HepG2 (cell line): ENCODE measurements at regions of chr6 and their contacts with region 1.

Region 1: GRCh38 chr6:57172136-57173055 is at the start of gene BAG2:
- DNase-seq: peak; percentile 88
- ATAC-seq: peak; percentile 94
- H3K4me3 ChIP-seq: peak within 1 kb of the TSS; percentile 69 to 90 (median 72)
- H3K27ac ChIP-seq: peak within 1 kb of the TSS; percentile 94
- H3K4me1 ChIP-seq: peaks cover 41% of the 10 kb centered on the region
- H3K27me3 ChIP-seq: no peaks in the 10 kb centered on the region; a peak in 1 of 5 replicates
- CTCF ChIP-seq: peak; percentile 59
- EP300 ChIP-seq: peak; percentile 6 to 53; a peak in 2 of 4 replicates
- POLR2A ChIP-seq: peak; percentile 93 to 98
- RAD21 ChIP-seq: peak; percentile 73; the same call in 1 of the 2 replicates
- total RNA-seq, gene BAG2: 15.1 and 23.0 TPM in 2 replicates

Region 2: DNA sequence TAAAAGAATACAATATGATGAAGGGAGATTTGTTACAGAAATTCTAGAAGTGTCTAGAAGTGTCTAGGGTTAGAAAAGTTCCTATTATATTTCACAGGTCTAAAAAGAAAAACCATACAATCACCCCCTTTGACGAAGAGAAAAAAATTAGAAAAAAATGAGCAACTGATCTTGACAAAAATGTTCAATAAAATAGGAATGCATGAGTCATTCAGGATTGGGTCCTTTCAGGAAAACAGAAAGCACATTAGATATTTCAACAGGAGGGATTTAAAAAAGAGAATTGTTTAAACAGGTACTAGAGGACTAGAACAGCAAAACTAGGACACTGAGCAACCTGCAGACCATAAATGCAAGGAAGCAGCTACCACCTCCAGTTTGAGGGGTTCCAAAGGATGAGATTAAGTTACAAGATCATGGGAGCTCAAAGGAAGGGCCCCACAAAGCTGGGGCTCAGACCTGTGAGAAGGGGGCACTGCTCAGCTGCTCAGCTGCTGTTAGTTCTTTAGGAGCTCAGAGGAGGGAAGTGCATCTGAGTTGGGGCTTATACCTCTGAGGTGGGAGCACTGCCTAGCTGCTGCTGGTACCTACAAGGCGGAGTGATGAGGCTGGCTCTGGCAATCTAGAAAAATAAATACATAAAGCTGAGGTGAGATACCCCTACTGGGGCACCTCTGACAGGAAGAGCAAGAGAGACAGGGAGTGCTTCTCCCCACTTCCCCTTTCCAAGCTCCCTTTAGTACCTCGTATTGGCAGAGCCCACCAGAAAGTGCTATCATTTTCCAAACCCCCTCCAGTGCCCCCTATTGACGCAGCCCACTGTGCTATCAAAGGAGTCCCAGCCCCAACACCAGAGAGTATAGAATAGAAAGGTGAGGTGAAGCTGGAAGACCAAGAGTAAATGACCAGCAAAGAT is 244.6 kb before region 1 on chr6:
- CTCF ChIA-PET with region 1: no interaction called
- POLR2A ChIA-PET with region 1: no interaction called
- in situ Hi-C with region 1: no loop called
- intact Hi-C with region 1: no loop called
- DNase-seq: no peak
- ATAC-seq: no peak
- H3K4me3 ChIP-seq: no peak overlapping the region
- H3K27ac ChIP-seq: no peak overlapping the region
- H3K4me1 ChIP-seq: 0 out of 2 replicates have a peak, but pooled peaks cover 4% of the 10 kb centered on the region
- H3K27me3 ChIP-seq: peaks cover 0 to 1% of the 10 kb centered on the region in 2 experiments; a peak in 1 of 5 replicates
- CTCF ChIP-seq: no peak
- EP300 ChIP-seq: no peak
- POLR2A ChIP-seq: no peak
- RAD21 ChIP-seq: no peak

Region 3: DNA sequence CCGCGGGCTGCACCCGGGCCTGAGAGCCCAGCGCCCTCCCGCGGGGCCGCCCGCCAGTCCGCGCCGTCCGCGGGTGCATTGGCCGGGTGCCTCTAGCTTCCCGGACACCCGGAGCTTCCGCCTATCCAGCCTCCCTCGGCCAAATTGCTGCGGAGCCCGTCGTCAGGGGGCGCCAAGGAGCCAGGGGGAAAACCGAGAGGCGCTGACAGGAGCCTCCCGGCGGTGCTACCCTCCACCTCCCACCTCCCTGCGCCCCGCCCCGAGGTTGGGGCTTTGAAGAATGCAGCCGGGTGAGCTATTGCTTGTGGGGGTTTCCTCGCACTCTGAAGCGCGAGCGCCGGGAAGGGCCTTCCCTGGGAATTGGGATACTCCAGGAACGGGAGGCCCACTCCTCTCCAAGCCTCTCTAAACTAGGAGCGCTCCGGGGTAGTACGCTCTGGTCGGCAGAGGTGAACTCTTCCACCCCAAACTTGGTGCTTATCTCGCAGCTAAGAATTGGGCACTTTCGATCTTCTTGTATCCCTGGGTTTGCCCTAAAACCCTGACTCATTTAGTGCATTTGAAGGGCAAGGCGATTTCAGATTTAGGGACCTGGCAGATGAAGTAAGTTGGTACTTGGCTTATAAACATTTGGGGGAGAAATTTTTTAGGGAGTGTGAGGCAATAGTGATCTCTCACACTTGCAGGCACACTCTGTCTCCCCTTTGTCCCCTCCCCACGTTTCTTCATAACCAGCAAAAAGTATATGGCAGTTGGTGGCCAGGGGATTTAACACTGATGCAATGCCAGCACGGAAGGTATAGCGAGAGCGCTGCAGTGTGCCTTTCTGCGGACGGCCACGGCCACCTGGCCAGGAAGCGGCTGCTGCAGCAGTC is 217.0 kb before region 1 on chr6:
- CTCF ChIA-PET with region 1: no interaction called
- POLR2A ChIA-PET with region 1: interaction called, 3 read pairs
- in situ Hi-C with region 1: no loop called
- intact Hi-C with region 1: loop called (anchors 5 kb)
- DNase-seq: peak; percentile 83
- ATAC-seq: peak; percentile 91
- H3K4me3 ChIP-seq: peak overlapping the region; percentile 51 to 75 (median 56)
- H3K27ac ChIP-seq: no peak overlapping the region
- H3K4me1 ChIP-seq: peaks cover 14% of the 10 kb centered on the region
- H3K27me3 ChIP-seq: peaks cover 0 to 14% of the 10 kb centered on the region in 2 experiments; a peak in 3 of 5 replicates
- CTCF ChIP-seq: peak; percentile 93
- EP300 ChIP-seq: no peak
- POLR2A ChIP-seq: no peak
- RAD21 ChIP-seq: peak; percentile 86

Region 4: GRCh38 chr6:57089687-57090460 is 82.5 kb before region 1 on chr6 and contains the start of gene ZNF451:
- CTCF ChIA-PET with region 1: interaction called, 3 read pairs
- POLR2A ChIA-PET with region 1: interaction called, 9 read pairs
- in situ Hi-C with region 1: no loop called
- intact Hi-C with region 1: loop called (anchors 1 kb)
- DNase-seq: peak; percentile 97
- ATAC-seq: peak; percentile 98
- H3K4me3 ChIP-seq: peak within 1 kb of the TSS; percentile 45 to 66 (median 62)
- H3K27ac ChIP-seq: peak within 1 kb of the TSS; percentile 65
- H3K4me1 ChIP-seq: peaks cover 67% of the 10 kb centered on the region
- H3K27me3 ChIP-seq: no peaks in the 10 kb centered on the region
- CTCF ChIP-seq: peak; percentile 41; the same call in 1 of the 2 replicates
- EP300 ChIP-seq: peak in 1 of 2 experiments; percentile 60; a peak in 2 of 4 replicates
- POLR2A ChIP-seq: peak; percentile 83 to 85
- RAD21 ChIP-seq: peak; percentile 62
- total RNA-seq, gene ZNF451: 65.7 and 104 TPM in 2 replicates

Region 5: DNA sequence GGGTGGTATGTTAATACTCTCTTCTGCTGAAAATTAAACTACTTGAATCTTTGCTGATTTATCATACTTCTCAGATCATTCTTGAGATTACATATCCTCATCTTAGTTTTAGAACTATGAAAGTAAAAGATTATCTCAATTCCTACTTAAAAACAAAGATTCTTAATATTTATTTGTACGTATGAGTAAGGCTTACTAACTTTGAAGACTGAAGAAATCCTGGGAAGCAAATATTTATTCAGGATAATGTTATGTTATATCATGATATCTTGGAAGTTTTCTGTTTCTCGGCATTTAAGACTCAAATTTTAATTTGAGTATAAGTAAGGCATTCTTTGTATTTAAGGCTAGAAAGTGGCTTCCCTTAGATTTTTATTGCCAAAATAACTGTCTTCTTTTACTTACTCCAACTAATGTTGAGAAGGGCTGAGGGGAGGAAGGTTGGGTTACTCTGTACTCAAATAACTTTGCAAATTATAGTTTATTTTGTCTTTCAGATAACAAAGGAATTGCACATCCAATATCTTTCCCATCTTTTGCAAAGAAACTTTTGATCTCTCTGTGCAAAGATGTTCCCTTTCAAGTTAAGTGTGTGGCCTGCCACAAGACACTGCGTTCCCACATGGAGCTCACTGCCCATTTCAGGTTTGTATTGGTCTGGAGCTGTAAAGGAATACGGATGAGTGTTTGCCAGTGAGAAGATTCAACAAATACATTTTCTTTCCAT is 30.8 kb before region 1 on chr6:
- CTCF ChIA-PET with region 1: no interaction called
- POLR2A ChIA-PET with region 1: interaction called, 6 read pairs
- in situ Hi-C with region 1: no loop called
- intact Hi-C with region 1: loop called (anchors 2 kb)
- DNase-seq: peak; percentile 83
- ATAC-seq: peak; percentile 97
- H3K4me3 ChIP-seq: no peak overlapping the region; a peak in 1 of 6 replicates
- H3K27ac ChIP-seq: peak overlapping the region; percentile 12
- H3K4me1 ChIP-seq: peaks cover 25% of the 10 kb centered on the region
- H3K27me3 ChIP-seq: no peaks in the 10 kb centered on the region
- CTCF ChIP-seq: no peak
- EP300 ChIP-seq: peak in 1 of 2 experiments; percentile 60; a peak in 1 of 4 replicates
- POLR2A ChIP-seq: no peak
- RAD21 ChIP-seq: no peak

Region 6: GRCh38 chr6:57288115-57288514 is 115.7 kb after region 1 on chr6:
- CTCF ChIA-PET with region 1: no interaction called
- POLR2A ChIA-PET with region 1: no interaction called
- in situ Hi-C with region 1: no loop called
- intact Hi-C with region 1: no loop called
- DNase-seq: no peak
- ATAC-seq: no peak
- H3K4me3 ChIP-seq: no peak overlapping the region
- H3K27ac ChIP-seq: no peak overlapping the region
- H3K4me1 ChIP-seq: no peaks in the 10 kb centered on the region
- H3K27me3 ChIP-seq: 0 out of 5 replicates have a peak, but pooled peaks cover 0 to 9% of the 10 kb centered on the region in 2 experiments
- CTCF ChIP-seq: no peak
- EP300 ChIP-seq: no peak
- POLR2A ChIP-seq: no peak
- RAD21 ChIP-seq: no peak